ENCODE measurements at regions of chr3 and their contacts with region 1.

Region 1: DNA sequence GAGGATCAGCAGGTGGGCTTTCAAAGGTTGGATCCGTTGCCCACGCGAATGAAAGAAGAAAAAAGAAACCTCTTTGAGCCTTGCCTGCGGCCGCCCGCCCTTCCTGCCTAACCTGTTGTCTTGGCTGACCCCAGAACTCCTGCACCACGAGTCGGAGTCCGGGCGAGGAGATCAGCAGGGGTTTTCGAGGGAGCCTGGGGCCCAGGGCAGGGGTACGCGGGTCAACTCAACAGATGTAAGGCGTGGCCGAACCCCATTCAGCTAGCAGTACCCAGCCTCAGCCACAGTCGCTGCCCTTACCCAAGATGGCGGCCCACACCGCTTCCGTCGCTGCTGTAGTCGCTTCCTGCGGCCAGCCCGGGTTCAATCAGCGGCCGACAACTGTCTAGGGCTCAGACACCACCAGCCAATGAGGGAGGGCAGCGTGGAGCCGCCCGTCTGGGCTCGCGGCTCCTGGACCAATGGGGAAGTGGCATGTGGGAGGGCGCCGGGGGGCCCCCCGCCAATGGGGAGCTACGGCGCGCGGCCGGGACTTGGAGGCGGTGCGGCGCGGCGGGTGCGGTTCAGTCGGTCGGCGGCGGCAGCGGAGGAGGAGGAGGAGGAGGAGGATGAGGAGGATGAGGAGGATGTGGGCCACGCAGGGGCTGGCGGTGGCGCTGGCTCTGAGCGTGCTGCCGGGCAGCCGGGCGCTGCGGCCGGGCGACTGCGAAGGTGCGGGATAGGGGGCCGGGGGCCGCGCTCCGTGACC is at the start of gene MANF:
- DNase-seq: peak; percentile 95
- H3K4me3 ChIP-seq: peak within 1 kb of the TSS; percentile 79
- H3K27ac ChIP-seq: peak within 1 kb of the TSS; percentile 94
- H3K4me1 ChIP-seq: no peaks in the 10 kb centered on the region
- H3K27me3 ChIP-seq: no peaks in the 10 kb centered on the region
- CTCF ChIP-seq: no peak
- total RNA-seq, gene MANF: 82.8 and 106 TPM in 2 replicates

Region 2: GRCh38 chr3:50568947-50569749 is 815.8 kb before region 1 on chr3 and contains the start of gene HEMK1:
- CTCF ChIA-PET with region 1: no interaction called
- POLR2A ChIA-PET with region 1: no interaction called
- intact Hi-C with region 1: loop called (anchors 5 kb)
- DNase-seq: peak; percentile 92
- H3K4me3 ChIP-seq: peak within 1 kb of the TSS; percentile 62
- H3K27ac ChIP-seq: peak within 1 kb of the TSS; percentile 76
- H3K4me1 ChIP-seq: no peaks in the 10 kb centered on the region
- H3K27me3 ChIP-seq: no peaks in the 10 kb centered on the region
- CTCF ChIP-seq: no peak
- total RNA-seq, gene HEMK1: 5.7 and 7.9 TPM in 2 replicates

Region 3: GRCh38 chr3:51257870-51258269 is 127.0 kb before region 1 on chr3:
- CTCF ChIA-PET with region 1: no interaction called
- POLR2A ChIA-PET with region 1: no interaction called
- intact Hi-C with region 1: no loop called
- DNase-seq: no peak
- H3K4me3 ChIP-seq: no peak overlapping the region
- H3K27ac ChIP-seq: no peak overlapping the region
- H3K4me1 ChIP-seq: no peaks in the 10 kb centered on the region
- H3K27me3 ChIP-seq: no peaks in the 10 kb centered on the region
- CTCF ChIP-seq: no peak

Region 4: GRCh38 chr3:51646091-51646490 is 261.2 kb after region 1 on chr3:
- CTCF ChIA-PET with region 1: no interaction called
- POLR2A ChIA-PET with region 1: no interaction called
- intact Hi-C with region 1: no loop called
- DNase-seq: no peak
- H3K4me3 ChIP-seq: no peak overlapping the region
- H3K27ac ChIP-seq: no peak overlapping the region
- H3K4me1 ChIP-seq: no peaks in the 10 kb centered on the region
- H3K27me3 ChIP-seq: no peaks in the 10 kb centered on the region
- CTCF ChIP-seq: no peak

Region 5: GRCh38 chr3:51682079-51682478 is 297.2 kb after region 1 on chr3:
- CTCF ChIA-PET with region 1: no interaction called
- POLR2A ChIA-PET with region 1: no interaction called
- intact Hi-C with region 1: loop called (anchors 5 kb)
- DNase-seq: peak; percentile 82
- H3K4me3 ChIP-seq: no peak overlapping the region
- H3K27ac ChIP-seq: no peak overlapping the region
- H3K4me1 ChIP-seq: peaks cover 3% of the 10 kb centered on the region
- H3K27me3 ChIP-seq: no peaks in the 10 kb centered on the region
- CTCF ChIP-seq: peak; percentile 62

Measured in A673 (cell line).